Caco-2 (cell line): ENCODE measurements at regions of chr12 and their contacts with region 1.

Region 1: DNA sequence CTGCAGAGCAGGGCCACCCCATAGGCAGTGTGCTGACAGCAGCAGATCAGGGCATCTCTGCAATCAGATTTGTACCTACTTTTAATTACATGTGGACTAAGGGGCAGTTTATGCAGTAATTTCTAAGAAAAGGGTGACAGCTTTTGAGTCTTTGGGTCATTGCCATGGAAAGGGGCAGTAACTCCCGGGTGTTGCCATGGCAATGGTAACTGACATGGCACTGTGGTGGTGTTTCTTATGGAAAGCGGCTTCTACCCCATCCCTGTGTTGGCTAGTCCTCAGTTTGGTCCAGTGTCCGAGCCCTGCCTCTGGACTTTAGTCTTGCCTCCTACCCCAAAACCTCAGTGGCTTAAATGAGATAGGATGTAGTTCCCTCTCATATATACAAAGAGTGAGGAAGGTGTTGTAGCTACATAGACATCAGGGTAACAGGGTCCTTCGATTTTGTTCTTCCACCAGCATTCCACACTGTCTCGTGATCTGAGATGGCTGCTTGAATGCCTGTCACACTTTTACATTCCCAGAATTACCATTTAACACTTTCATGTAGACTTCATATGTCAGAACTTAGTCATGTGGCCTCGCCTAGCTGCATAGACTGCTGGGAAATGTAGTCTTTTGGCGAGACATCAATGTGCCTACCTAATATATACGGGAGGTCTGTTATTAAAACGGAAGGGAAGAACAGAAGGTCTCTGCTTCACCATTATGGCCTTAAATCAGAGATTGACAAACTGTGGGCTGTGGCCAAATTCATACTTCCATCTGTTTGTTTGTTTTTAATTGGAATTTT is 10.9 kb upstream of the HRK start:
- DNase-seq: no peak
- H3K4me3 ChIP-seq: no peak overlapping the region
- H3K4me3 Mint-ChIP-seq: no peak overlapping the region
- H3K27ac Mint-ChIP-seq: no peak overlapping the region
- H3K4me1 ChIP-seq: no peaks in the 10 kb centered on the region
- H3K4me1 Mint-ChIP-seq: no peaks in the 10 kb centered on the region
- H3K27me3 ChIP-seq: no peaks in the 10 kb centered on the region
- H3K27me3 Mint-ChIP-seq: no peaks in the 10 kb centered on the region
- CTCF ChIP-seq: no peak

Region 2: GRCh38 chr12:116434155-116435011 is 457.8 kb before region 1 on chr12:
- CTCF ChIA-PET with region 1: interaction called, 11 read pairs
- POLR2A ChIA-PET with region 1: no interaction called
- intact Hi-C with region 1: no loop called
- DNase-seq: peak; percentile 90 to 94
- H3K4me3 ChIP-seq: no peak overlapping the region
- H3K4me3 Mint-ChIP-seq: peak overlapping the region; percentile 50
- H3K27ac Mint-ChIP-seq: peak overlapping the region; percentile 81
- H3K4me1 ChIP-seq: peaks cover 47% of the 10 kb centered on the region
- H3K4me1 Mint-ChIP-seq: peaks cover 41% of the 10 kb centered on the region
- H3K27me3 ChIP-seq: no peaks in the 10 kb centered on the region
- H3K27me3 Mint-ChIP-seq: no peaks in the 10 kb centered on the region
- CTCF ChIP-seq: no peak